Ovary (tissue), 10 donors: ENCODE measurements at regions of chr11 and their contacts with region 1.

Region 1: GRCh38 chr11:68206187-68206601 is 6.9 kb downstream of the KMT5B start:
- DNase-seq: no peak
- H3K4me3 ChIP-seq: no peak overlapping the region
- H3K27ac ChIP-seq: no peak overlapping the region
- H3K4me1 ChIP-seq: peaks cover 14% of the 10 kb centered on the region
- H3K27me3 ChIP-seq: no peaks in the 10 kb centered on the region
- CTCF ChIP-seq: peak; percentile 69 to 82 (median 71)
- EP300 ChIP-seq: no peak
- POLR2A ChIP-seq: no peak

Region 2: DNA sequence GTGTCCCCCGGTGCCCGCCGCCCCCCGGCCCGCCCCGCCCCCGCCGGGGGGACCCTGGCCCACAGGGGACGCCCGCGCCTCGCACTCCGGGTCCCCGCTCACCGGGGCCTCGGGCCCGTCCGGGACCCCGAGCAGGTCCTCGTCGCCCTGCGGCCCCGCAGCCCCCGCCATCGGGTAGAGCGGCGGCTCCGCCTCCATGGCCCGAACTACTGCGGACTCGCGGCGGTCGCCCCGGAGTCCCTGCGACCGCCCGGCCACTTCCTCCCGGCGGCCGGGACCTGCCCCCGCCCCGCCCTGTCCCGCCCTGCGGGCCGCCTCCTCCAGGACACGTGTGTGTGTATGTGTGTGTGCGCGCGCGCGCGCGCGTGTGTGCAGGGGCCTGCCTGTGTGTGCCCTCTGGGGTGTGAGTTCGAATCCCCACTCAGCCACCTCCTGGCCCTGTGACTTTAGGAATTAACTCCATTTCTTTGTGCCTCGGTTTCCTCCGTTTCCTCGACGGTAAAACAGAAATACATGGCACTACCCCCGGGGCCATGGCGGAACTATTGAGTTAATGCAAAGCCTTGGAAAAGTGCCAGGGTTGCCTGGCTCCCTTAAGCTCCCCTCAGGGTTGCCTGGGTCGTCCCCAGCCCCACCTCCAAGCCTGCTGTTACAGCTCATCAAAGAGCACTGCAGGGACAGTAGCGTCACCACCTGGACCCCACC is 202.2 kb before region 1 on chr11 and contains the start of gene UNC93B1:
- intact Hi-C with region 1: loop called in 1 of 4 experiments (anchors 10 kb)
- DNase-seq: peak; percentile 74 to 82 (median 75)
- H3K4me3 ChIP-seq: peak within 1 kb of the TSS; percentile 62
- H3K27ac ChIP-seq: peak within 1 kb of the TSS; percentile 13 to 50
- H3K4me1 ChIP-seq: peaks cover 2% of the 10 kb centered on the region
- H3K27me3 ChIP-seq: no peaks in the 10 kb centered on the region
- CTCF ChIP-seq: no peak
- EP300 ChIP-seq: no peak
- POLR2A ChIP-seq: no peak
- total RNA-seq, gene UNC93B1: 9.0 to 39.6 (median 14.2) TPM

Region 3: DNA sequence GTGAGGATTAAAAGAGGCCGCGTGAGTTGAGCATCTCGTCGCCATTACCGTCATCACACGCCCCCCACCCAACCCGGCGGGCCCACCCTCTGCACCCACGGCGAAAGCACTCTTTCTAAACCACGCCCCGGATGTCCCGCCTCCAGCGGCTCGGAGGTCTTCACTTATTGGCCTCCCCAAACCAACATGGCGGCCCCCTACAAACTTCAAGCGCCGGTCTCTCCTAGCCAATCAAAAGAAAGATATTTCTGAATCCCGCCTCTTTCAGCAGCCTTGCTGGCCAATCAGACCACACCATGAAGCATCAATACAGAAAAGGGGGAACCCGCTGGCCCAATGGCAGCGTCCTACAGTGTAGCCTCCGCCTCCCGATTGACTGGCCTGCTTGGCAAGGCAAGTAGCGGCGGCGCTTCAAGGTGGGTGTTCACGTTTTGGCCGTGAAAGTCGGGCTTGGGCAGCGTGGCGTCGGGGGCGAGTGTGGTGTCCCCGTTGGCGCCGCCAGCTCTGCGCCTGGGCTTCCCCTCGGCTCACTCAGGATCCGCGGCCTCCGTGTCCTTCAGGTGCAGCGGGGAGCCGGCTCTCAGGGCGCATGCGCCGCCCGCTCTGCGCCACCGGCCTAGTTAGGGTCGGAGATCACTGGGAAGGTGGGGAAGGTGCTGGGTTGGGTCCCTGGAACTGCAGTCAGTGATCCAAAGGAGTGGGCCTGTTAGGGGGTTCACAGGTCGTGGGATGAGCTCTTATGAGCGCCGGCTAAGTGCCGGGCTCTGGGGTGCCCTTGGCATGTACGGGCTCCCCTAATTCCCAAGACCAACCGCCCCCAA is 175.7 kb before region 1 on chr11 and contains the start of gene NDUFS8:
- intact Hi-C with region 1: loop called in 1 of 4 experiments (anchors 10 kb)
- DNase-seq: peak; percentile 96 to 97 (median 96)
- H3K4me3 ChIP-seq: peak within 1 kb of the TSS; percentile 68
- H3K27ac ChIP-seq: peak within 1 kb of the TSS in 1 of 2 donors; percentile 79
- H3K4me1 ChIP-seq: peaks cover 10% of the 10 kb centered on the region
- H3K27me3 ChIP-seq: no peaks in the 10 kb centered on the region
- CTCF ChIP-seq: no peak
- EP300 ChIP-seq: no peak
- POLR2A ChIP-seq: peak; percentile 46
- total RNA-seq, gene NDUFS8: 95.6 to 163 (median 107) TPM

Region 4: DNA sequence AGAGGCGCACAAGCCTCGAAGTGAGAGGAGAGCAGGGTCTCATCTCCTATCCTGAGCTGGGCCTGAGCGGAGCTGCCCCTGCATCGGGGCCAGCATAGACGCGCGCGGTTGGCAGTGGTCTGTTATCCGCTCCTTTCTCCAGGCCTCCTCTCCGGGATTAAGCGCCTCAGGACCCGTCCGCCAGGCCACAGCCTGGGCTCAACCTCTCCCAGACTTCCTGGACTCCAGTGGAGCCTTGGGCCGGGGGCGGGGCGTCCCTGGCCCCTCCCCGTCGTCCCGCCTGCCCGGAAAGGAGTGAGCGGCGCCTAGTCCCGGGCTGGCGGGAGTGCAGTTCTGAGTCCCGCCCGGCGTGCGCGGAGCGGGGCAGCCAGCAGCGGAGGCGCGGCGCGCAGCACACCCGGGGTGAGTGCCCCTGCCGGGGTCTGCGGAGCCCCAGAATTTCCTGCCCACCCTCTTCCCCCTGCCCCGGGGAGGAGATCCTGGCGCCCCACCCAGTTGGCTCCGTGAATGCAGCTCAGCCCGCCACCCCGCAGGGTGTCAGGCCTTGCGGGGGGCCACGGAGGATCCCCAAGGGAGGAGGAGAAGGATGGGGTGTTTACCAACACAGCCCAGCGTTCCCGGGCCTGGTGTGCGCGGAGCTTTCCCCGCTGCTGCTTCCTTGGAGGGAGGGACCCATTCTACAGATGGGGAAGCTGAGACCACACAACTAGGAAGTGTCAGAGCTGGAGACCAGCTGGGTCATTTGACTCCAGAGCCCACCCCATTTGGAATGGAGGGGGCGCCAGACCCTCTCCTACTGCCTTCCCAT is 167.3 kb before region 1 on chr11 and contains the start of gene TCIRG1:
- intact Hi-C with region 1: loop called in 3 of 4 experiments (anchors 10 kb)
- DNase-seq: peak; percentile 88 to 91 (median 89)
- H3K4me3 ChIP-seq: peak within 1 kb of the TSS; percentile 72
- H3K27ac ChIP-seq: peak within 1 kb of the TSS; percentile 70 to 84
- H3K4me1 ChIP-seq: peaks cover 14% of the 10 kb centered on the region
- H3K27me3 ChIP-seq: no peaks in the 10 kb centered on the region
- CTCF ChIP-seq: peak in 1 of 3 donors; percentile 58
- EP300 ChIP-seq: no peak
- POLR2A ChIP-seq: peak; percentile 90
- total RNA-seq, gene TCIRG1: 55.8 to 109 (median 78.6) TPM

Region 5: GRCh38 chr11:68121067-68121899 is 84.9 kb before region 1 on chr11 and contains the start of gene CHKA:
- intact Hi-C with region 1: loop called in 1 of 4 experiments (anchors 10 kb)
- DNase-seq: peak; percentile 94 to 96 (median 95)
- H3K4me3 ChIP-seq: peak within 1 kb of the TSS; percentile 66
- H3K27ac ChIP-seq: peak within 1 kb of the TSS; percentile 88 to 100
- H3K4me1 ChIP-seq: peaks cover 11% of the 10 kb centered on the region
- H3K27me3 ChIP-seq: no peaks in the 10 kb centered on the region
- CTCF ChIP-seq: peak in 2 of 3 donors; percentile 14 to 35
- EP300 ChIP-seq: peak; percentile 18
- POLR2A ChIP-seq: peak; percentile 85
- total RNA-seq, gene CHKA: 20.7 to 45.3 (median 31.4) TPM